ENCODE measurements at regions of chr9 and their contacts with region 1.

Region 1: DNA sequence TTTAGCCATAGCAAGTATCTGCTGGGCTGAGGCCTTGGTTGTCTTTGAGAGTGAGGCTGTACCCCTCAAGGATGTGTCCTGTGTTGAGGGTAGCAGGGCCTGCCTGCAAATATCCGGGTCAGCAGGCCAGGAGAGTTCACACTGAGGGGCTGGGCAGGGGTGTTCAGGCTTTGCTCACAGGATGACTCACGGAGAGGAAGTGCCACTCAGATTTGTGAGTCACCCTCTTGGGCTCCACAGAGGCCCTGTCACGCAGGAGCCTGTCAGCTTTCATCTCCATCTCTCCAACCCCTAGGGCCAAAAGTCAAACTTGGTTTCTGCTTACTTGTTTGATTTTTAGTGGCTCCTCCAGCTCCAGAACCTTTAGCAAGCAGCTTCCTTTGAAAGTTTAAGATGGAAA is 211.5 kb downstream of the SEC61B start:
- DNase-seq: peak; percentile 65
- H3K4me3 Mint-ChIP-seq: no peak overlapping the region
- H3K27ac Mint-ChIP-seq: no peak overlapping the region
- H3K4me1 Mint-ChIP-seq: peaks cover 4% of the 10 kb centered on the region
- H3K27me3 Mint-ChIP-seq: no peaks in the 10 kb centered on the region

Region 2: DNA sequence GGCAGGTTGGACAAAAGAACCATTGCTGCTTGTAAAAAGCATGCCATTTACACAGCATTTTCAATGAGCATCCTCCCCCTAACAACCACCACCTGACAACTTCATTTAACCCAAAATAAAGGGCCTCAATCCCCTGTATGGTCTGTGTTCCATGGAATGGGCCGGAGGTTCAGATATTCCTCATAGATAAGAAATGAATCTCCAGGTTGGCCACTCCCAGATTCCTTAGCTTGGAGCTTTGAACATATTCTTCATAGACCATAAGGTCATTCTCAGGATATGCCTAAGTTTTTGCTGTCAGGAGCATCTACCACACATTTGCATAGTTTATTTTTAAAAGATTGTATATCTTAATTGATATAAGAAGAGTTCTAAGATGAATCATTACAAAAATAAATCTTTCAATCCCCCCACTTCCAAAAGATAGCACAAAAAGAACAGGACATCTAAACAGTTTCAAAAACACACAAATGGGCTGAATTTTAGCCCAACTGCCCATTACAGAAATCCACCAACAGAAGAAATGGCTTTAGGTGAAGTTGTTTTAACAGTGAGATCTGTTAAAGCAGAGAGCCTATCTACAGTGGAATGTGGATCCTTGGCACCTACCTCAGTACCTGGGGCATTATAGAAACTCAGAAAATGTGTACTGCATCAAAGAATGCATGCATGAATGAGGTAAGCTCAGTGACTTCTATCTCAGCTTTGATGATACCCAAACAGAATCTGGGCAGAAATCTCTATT is 31.7 kb before region 1 on chr9:
- CTCF ChIA-PET with region 1: no interaction called
- intact Hi-C with region 1: loop called (anchors 1 kb)
- DNase-seq: no peak
- H3K4me3 Mint-ChIP-seq: no peak overlapping the region
- H3K27ac Mint-ChIP-seq: no peak overlapping the region
- H3K4me1 Mint-ChIP-seq: no peaks in the 10 kb centered on the region
- H3K27me3 Mint-ChIP-seq: peaks cover 2% of the 10 kb centered on the region